ENCODE measurements at regions of chr6 and their contacts with region 1.

Region 1: DNA sequence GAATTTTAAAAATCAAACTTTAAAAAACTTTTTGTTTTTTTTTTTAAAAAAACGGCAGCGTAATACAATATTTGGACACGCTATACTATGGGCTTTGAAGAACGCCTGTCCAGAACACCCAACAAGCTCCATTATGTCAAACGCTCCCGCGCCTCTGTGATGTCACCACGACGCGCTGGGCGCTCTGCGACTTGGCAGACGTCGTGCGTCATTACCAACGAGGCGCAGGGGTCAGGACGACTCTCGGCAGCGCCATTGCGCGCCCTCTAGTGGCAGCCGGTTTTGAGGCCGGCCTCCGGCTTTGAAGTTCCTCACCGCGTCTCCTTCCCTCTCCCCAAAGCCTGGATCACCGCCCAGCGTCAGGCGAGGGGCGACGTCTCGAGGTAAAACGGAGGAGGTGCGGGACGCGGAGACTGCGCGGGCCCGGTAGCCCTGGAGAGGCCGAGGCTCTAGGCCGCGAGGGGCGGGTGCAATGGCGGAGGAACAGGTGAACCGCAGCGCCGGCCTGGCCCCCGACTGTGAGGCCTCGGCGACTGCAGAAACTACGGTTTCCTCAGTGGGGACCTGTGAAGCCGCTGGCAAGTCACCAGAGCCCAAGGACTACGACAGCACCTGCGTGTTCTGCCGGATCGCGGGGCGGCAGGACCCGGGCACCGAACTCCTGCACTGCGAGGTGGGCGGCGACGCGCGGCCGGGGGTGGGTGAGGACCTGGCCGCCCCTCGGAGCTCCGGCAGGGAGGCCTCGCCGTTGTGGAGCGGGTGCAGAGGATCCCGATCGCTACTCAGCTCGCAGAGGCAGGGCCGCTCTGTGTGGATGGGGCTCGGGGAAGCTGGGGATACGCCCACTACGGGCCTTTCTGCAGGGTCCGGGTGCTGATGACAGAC is at the start of gene HINT3:
- DNase-seq: peak; percentile 96
- H3K4me3 ChIP-seq: peak within 1 kb of the TSS; percentile 81 to 91
- H3K27ac ChIP-seq: peak within 1 kb of the TSS; percentile 93 to 95
- H3K4me1 ChIP-seq: no peaks in the 10 kb centered on the region
- H3K27me3 ChIP-seq: no peaks in the 10 kb centered on the region
- CTCF ChIP-seq: peak; percentile 94 to 99 (median 98)
- POLR2A ChIP-seq: peak; percentile 63
- total RNA-seq, gene HINT3: 29.5 to 40.9 TPM

Region 2: DNA sequence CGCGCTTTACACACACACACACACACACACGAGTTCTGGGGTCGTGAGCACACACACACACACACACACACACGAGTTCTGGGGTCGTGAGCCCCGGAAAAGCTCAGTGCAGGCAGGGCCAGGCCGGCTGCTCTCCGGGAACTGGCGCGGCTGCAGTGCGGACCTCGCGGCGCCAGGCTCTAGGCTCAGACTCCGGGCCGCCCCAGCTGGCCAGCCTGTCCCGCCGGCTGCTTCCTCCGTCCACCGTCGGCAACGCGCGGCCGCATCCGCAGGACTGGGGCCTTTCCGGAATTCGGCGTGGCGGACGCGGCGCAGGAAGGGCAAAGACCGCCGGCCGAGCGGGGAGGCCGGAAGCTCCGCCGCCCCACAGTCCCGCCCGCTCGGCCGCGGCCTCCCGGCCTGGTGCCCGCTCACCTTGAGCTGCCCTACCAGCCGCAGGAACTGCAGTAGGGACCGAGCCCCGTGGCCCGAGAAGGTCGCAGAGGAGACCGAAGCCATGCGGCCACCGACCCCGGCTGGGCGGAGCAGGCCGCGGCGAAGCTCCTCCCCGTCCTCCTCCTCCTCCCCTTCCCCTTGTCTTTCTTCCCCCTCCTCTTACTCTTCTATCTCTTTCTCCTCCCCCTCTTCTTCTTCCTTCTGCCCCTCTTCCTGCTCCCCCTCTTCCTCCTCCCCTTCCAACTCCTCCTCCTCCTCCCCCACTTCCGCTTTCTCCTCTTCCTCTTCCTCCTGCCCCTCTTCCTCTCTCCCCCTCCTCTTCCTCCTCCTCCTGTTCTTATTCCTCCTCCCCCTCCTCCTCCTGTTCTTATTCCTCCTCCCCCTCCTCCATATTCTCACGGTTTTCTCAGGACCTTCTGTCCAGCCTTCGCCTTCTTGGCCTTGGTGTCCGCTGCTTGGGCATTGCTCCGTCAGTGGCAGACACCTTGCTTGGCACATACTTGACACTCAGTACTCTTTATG is 655.0 kb before region 1 on chr6 and contains the start of gene HDDC2:
- intact Hi-C with region 1: loop called (anchors 10 kb)
- DNase-seq: peak; percentile 34
- H3K4me3 ChIP-seq: peak within 1 kb of the TSS; percentile 60 to 71
- H3K27ac ChIP-seq: peak within 1 kb of the TSS; percentile 83 to 87
- H3K4me1 ChIP-seq: no peaks in the 10 kb centered on the region
- H3K27me3 ChIP-seq: no peaks in the 10 kb centered on the region
- CTCF ChIP-seq: peak in 1 of 4 experiments; percentile 16
- POLR2A ChIP-seq: no peak
- total RNA-seq, gene HDDC2: 50.4 to 50.9 TPM

Region 3: DNA sequence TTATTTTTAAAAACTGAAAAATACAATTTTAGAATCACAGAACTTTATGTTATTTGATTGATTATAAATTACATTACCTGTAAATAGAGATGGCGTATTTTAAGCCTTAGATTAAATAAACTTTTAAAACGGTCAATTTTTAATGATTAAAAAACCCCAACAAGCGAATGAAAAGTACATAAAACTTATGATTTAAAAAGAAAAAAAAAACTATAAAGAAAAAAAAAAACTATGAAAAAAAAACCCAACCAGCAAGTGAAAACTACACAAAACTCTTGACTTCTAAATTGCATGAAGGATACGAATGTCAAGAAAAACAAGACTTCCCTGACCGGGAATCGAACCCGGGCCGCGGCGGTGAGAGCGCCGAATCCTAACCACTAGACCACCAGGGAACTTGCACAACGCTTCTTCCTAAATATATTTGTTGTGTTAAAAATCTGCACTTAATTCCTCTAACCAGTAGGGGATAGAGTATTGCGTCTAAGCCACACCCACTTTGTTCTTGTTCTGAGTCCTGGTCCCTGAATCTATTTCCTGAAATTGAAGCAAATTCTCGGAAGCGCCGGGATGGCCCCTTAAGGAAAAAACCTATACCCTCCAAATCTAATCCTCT is 176.7 kb before region 1 on chr6:
- intact Hi-C with region 1: loop called (anchors 2 kb)
- DNase-seq: peak; percentile 86
- H3K4me3 ChIP-seq: peak overlapping the region; percentile 42 to 43
- H3K27ac ChIP-seq: peak overlapping the region; percentile 76 to 80
- H3K4me1 ChIP-seq: no peaks in the 10 kb centered on the region
- H3K27me3 ChIP-seq: no peaks in the 10 kb centered on the region
- CTCF ChIP-seq: peak; percentile 16 to 83 (median 48)
- POLR2A ChIP-seq: peak; percentile 34

Region 4: GRCh38 chr6:125858427-125859320 is 98.1 kb before region 1 on chr6:
- intact Hi-C with region 1: loop called (anchors 5 kb)
- DNase-seq: peak; percentile 67
- H3K4me3 ChIP-seq: no peak overlapping the region
- H3K27ac ChIP-seq: no peak overlapping the region
- H3K4me1 ChIP-seq: no peaks in the 10 kb centered on the region
- H3K27me3 ChIP-seq: no peaks in the 10 kb centered on the region
- CTCF ChIP-seq: peak; percentile 32 to 75 (median 60)
- POLR2A ChIP-seq: no peak

Region 5: GRCh38 chr6:125884634-125885371 is 71.9 kb before region 1 on chr6:
- intact Hi-C with region 1: no loop called
- DNase-seq: no peak
- H3K4me3 ChIP-seq: no peak overlapping the region
- H3K27ac ChIP-seq: no peak overlapping the region
- H3K4me1 ChIP-seq: no peaks in the 10 kb centered on the region
- H3K27me3 ChIP-seq: no peaks in the 10 kb centered on the region
- CTCF ChIP-seq: no peak
- POLR2A ChIP-seq: no peak

Region 6: GRCh38 chr6:125995972-125996580 is 39.3 kb after region 1 on chr6:
- intact Hi-C with region 1: no loop called
- DNase-seq: peak; percentile 26
- H3K4me3 ChIP-seq: no peak overlapping the region
- H3K27ac ChIP-seq: no peak overlapping the region
- H3K4me1 ChIP-seq: no peaks in the 10 kb centered on the region
- H3K27me3 ChIP-seq: no peaks in the 10 kb centered on the region
- CTCF ChIP-seq: peak; percentile 77 to 91 (median 86)
- POLR2A ChIP-seq: no peak

Measured in prostate gland (tissue), 2 donors.